GM12878 (cell line): ENCODE measurements at regions of chr1 and their contacts with region 1.

Region 1: DNA sequence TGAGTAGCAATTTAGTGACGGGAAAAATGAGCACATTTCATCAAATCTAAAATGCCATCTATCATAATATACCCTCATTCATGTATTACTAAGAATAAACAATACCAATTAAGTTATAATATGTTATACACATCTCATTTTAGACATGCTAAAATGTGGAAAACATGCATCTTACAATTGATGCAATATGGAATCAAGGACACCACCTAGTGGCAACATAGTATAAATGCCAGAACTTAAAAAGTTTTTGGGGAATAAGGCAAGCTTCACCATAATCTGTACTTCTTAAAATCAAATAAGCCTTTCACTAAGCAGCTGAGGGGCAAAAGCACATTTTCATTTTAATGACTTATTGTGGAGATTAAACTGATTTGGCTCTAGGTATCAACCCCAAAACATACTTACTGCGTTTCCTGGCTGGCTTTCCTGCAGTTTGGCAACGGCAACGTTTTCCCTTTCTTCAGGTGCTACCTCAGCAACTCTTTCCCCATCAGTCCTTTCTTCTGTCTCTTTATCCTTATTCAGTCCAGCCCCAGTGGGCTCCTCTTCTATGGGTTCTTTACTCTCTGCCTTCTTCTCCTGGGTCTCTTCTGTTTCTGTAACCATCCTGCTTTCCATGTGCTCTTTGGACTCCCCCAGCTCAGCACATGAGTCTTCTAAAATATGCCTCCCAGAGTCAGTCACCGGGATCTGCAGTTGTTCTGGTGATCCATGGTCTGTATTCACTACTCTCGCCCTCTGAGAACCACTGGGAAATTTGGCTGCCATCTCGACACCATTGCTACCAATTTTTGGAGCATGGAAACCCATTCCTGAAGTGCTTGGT is 11.4 kb downstream of the SDE2 start:
- DNase-seq: no peak
- ATAC-seq: peak; percentile 42
- H3K4me3 ChIP-seq: no peak overlapping the region
- H3K27ac ChIP-seq: no peak overlapping the region
- H3K4me1 ChIP-seq: peaks cover 26% of the 10 kb centered on the region
- H3K27me3 ChIP-seq: no peaks in the 10 kb centered on the region
- CTCF ChIP-seq: peak; percentile 62 to 70 (median 63)
- EP300 ChIP-seq: no peak
- POLR2A ChIP-seq: no peak
- RAD21 ChIP-seq: peak; percentile 50

Region 2: GRCh38 chr1:225962440-225962975 is 25.2 kb before region 1 on chr1:
- CTCF ChIA-PET with region 1: interaction called, 30 read pairs
- POLR2A ChIA-PET with region 1: no interaction called
- RAD21 ChIA-PET with region 1: interaction called, 4 read pairs
- SMC1A ChIA-PET with region 1: interaction called, 6 read pairs
- in situ Hi-C with region 1: no loop called
- intact Hi-C with region 1: no loop called
- DNase-seq: no peak
- ATAC-seq: peak; percentile 99
- H3K4me3 ChIP-seq: no peak overlapping the region
- H3K27ac ChIP-seq: no peak overlapping the region
- H3K4me1 ChIP-seq: no peaks in the 10 kb centered on the region
- H3K27me3 ChIP-seq: no peaks in the 10 kb centered on the region; a peak in 1 of 4 replicates
- CTCF ChIP-seq: peak; percentile 67 to 85 (median 75)
- EP300 ChIP-seq: no peak
- POLR2A ChIP-seq: no peak
- RAD21 ChIP-seq: peak; percentile 60

Region 3: GRCh38 chr1:225999227-225999911 is 11.7 kb after region 1 on chr1 and contains the start of gene SDE2:
- CTCF ChIA-PET with region 1: interaction called, 67 read pairs
- POLR2A ChIA-PET with region 1: interaction called, 8 read pairs
- RAD21 ChIA-PET with region 1: interaction called, 10 read pairs
- SMC1A ChIA-PET with region 1: interaction called, 33 read pairs
- in situ Hi-C with region 1: no loop called
- intact Hi-C with region 1: no loop called
- DNase-seq: peak; percentile 95
- ATAC-seq: peak; percentile 83
- H3K4me3 ChIP-seq: peak within 1 kb of the TSS; percentile 96
- H3K27ac ChIP-seq: peak within 1 kb of the TSS; percentile 97
- H3K4me1 ChIP-seq: peaks cover 39% of the 10 kb centered on the region
- H3K27me3 ChIP-seq: no peaks in the 10 kb centered on the region
- CTCF ChIP-seq: no peak
- EP300 ChIP-seq: no peak; a peak in 1 of 4 replicates
- POLR2A ChIP-seq: peak; percentile 100
- RAD21 ChIP-seq: no peak
- polyA plus RNA-seq, gene SDE2: 2.7 to 4.3 TPM

Region 4: DNA sequence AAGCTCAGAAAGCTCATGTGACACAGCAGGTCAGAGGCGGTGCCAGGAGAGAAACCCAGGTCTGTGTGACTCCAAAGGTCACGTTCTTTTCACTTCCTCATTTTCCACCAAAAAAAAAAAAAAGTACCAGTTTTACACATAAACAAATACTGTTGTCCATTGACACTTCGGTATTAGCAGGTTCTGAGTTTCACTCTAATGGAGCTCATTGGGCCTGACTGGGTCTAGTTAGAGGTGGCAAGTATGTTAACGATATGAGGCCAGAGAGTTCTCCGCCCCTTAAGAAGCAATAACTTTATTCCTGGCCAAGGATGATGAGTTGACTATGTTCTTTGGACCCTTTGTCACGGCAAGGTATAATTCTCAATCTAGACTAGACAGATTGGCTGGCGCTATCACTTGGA is 41.4 kb after region 1 on chr1:
- CTCF ChIA-PET with region 1: interaction called, 15 read pairs
- POLR2A ChIA-PET with region 1: interaction called, 10 read pairs
- RAD21 ChIA-PET with region 1: interaction called, 4 read pairs
- SMC1A ChIA-PET with region 1: interaction called, 6 read pairs
- in situ Hi-C with region 1: no loop called
- intact Hi-C with region 1: no loop called
- DNase-seq: peak; percentile 59
- ATAC-seq: peak; percentile 93
- H3K4me3 ChIP-seq: no peak overlapping the region
- H3K27ac ChIP-seq: peak overlapping the region; percentile 36
- H3K4me1 ChIP-seq: peaks cover 26% of the 10 kb centered on the region
- H3K27me3 ChIP-seq: no peaks in the 10 kb centered on the region
- CTCF ChIP-seq: no peak
- EP300 ChIP-seq: peak; percentile 81 to 83
- POLR2A ChIP-seq: no peak
- RAD21 ChIP-seq: no peak

Region 5: DNA sequence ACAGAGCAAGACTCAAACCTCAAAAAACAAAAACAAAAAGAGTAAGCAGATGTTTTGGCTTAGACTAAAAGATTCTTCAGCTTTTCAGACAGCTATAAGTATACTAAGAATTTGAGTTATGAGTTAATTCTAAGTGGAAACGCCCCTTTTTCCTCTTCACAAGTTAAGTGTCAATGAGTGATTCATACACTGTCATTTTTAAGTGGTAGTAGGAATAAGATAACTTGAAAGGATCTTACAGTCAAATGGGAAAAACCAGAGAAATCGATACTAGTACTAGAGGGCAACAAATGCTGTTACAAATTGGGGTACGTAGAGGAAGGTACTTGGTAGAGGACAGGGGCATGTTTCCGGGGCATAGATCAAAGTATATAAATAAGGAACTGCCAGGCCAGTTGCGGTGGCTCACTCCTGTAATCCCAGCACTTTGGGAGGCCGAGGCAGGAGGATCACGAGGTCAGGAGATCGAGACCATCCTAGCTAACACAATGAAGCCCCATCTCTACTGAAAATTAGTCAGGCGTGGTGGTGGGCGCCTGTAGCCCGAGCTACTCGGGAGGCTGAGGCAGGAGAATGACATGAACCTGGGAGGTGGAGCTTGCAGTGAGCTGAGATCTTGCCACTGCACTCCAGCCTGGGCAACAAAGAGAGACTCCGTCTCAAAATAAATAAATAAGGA is 82.2 kb after region 1 on chr1:
- CTCF ChIA-PET with region 1: interaction called, 86 read pairs
- POLR2A ChIA-PET with region 1: interaction called, 15 read pairs
- RAD21 ChIA-PET with region 1: interaction called, 42 read pairs
- SMC1A ChIA-PET with region 1: interaction called, 52 read pairs
- in situ Hi-C with region 1: no loop called
- intact Hi-C with region 1: no loop called
- DNase-seq: no peak
- ATAC-seq: no peak
- H3K4me3 ChIP-seq: no peak overlapping the region
- H3K27ac ChIP-seq: no peak overlapping the region
- H3K4me1 ChIP-seq: peaks cover 11% of the 10 kb centered on the region
- H3K27me3 ChIP-seq: no peaks in the 10 kb centered on the region
- CTCF ChIP-seq: no peak
- EP300 ChIP-seq: no peak
- POLR2A ChIP-seq: no peak
- RAD21 ChIP-seq: no peak

Region 6: DNA sequence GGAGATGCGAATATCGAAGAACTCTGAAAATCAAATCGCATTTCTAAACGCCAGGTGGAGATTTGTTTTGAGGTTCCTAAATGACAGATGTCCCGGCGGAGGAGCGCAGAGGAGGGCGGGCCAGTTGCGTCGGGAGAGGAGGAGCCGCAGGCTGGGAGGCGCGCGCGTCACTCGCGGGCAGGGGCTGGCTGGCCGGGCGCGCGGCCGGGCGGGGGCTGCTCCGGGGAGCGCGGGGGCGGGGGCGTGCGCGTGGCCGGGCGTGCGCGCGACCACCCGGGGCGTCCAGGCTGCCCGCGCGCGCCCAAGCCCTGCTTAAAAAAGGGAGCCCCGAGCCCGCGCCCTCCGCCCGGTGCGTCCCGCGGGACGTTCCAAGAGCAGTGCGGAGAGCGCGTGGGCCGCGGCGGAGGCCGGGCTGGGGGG is 122.1 kb after region 1 on chr1:
- CTCF ChIA-PET with region 1: interaction called, 11 read pairs
- POLR2A ChIA-PET with region 1: interaction called, 4 read pairs
- RAD21 ChIA-PET with region 1: interaction called, 8 read pairs
- SMC1A ChIA-PET with region 1: interaction called, 4 read pairs
- in situ Hi-C with region 1: no loop called
- intact Hi-C with region 1: no loop called
- DNase-seq: no peak
- ATAC-seq: peak; percentile 71
- H3K4me3 ChIP-seq: peak overlapping the region; percentile 77
- H3K27ac ChIP-seq: peak overlapping the region; percentile 92
- H3K4me1 ChIP-seq: peaks cover 23% of the 10 kb centered on the region
- H3K27me3 ChIP-seq: no peaks in the 10 kb centered on the region
- CTCF ChIP-seq: peak in 2 of 3 experiments; percentile 12 to 20; a peak in 1 of 6 replicates
- EP300 ChIP-seq: no peak
- POLR2A ChIP-seq: 0 out of 2 replicates have a peak, but pooled peaks have one; percentile 13
- RAD21 ChIP-seq: peak; percentile 25; the same call in 1 of the 2 replicates

Region 7: DNA sequence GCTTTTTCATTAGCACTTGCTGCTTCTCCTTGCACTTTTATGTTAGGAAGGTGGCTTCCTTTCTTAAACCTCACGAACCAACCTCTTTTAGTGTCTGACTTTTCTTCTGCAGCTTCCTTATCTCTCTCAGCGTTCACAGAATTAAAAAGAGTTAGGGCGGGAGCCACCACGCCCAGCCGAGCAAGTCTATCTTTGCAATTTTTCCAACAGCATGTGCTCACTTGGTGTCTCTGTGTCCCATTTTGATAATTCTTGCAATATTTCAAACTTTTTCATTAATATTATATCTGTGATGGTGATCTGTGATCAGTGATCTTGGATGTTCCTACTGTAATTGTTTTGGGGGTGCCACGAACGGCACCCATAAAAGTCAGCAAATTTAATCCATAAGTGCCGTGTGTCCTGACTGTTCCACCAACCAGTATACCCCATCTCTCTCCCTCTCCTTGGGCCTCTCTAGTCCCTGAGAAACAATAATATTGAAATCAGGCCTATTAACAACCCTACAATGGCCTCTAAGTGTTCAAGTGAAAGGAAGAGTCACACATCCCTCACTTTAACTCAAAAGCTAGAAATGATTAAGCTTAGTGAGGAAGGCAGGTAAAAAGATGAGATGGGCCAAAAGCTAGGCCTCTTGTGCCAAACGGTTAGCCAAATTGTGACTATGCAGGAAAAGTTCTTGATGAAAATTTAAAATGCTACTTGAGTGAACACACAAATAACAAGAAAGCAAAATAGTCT is 767.3 kb after region 1 on chr1:
- CTCF ChIA-PET with region 1: no interaction called
- POLR2A ChIA-PET with region 1: no interaction called
- RAD21 ChIA-PET with region 1: no interaction called
- SMC1A ChIA-PET with region 1: no interaction called
- in situ Hi-C with region 1: no loop called
- intact Hi-C with region 1: no loop called
- DNase-seq: no peak
- ATAC-seq: no peak
- H3K4me3 ChIP-seq: no peak overlapping the region
- H3K27ac ChIP-seq: no peak overlapping the region
- H3K4me1 ChIP-seq: no peaks in the 10 kb centered on the region
- H3K27me3 ChIP-seq: no peaks in the 10 kb centered on the region
- CTCF ChIP-seq: no peak
- EP300 ChIP-seq: no peak
- POLR2A ChIP-seq: no peak
- RAD21 ChIP-seq: no peak